ENCODE measurements at regions of chr2 and their contacts with region 1.

Region 1: GRCh38 chr2:233711312-233712008 is 1.2 kb upstream of the UGT1A5 start:
- DNase-seq: peak; percentile 60
- H3K4me3 ChIP-seq: no peak overlapping the region
- H3K27ac ChIP-seq: no peak overlapping the region
- H3K4me1 ChIP-seq: peaks cover 4% of the 10 kb centered on the region
- H3K27me3 ChIP-seq: no peaks in the 10 kb centered on the region
- CTCF ChIP-seq: peak; percentile 88 to 92

Region 2: DNA sequence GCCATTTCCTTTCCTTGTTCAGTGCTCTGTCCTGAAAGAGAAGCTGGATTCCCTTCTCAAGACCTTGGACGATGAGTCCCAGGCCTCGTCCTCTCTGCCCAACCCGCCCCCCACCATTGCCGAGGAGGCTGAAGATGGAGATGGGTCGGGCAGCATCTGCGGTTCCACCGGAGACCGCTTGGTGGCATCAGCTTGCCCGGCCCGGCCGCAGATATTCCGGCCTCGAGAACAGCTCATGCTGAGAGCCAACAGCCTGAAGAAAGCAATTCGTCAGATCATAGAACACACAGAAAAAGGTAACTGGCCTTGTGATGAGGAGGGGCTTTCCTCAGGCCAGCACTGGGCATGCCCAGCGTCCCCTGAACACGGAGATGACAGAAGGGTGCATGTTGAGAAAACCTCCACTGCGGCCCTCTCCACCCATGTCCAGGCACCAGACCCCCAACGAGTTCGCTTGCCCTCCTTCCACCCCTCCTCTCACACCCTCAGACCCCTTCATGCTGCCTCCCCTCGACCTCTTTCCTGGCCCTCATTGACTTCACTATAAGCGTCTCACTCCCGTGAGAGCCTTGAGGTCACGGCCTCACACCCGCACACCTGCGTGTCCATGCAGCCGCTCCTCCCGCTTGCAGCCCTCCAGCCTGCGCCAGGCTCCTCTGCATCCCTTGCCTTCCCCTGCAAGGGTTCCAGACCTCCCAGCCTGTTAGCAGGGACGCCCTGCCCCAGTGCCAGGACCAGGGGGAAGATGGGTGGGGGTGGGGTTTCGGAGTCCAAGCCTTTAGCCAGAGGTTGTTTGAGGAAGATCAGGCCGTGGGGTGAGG is 262.2 kb before region 1 on chr2:
- CTCF ChIA-PET with region 1: no interaction called
- dilution Hi-C with region 1: no loop called
- in situ Hi-C with region 1: no loop called
- intact Hi-C with region 1: loop called (anchors 1 kb)
- DNase-seq: no peak
- H3K4me3 ChIP-seq: no peak overlapping the region
- H3K27ac ChIP-seq: no peak overlapping the region
- H3K4me1 ChIP-seq: no peaks in the 10 kb centered on the region
- H3K27me3 ChIP-seq: no peaks in the 10 kb centered on the region
- CTCF ChIP-seq: peak; percentile 48 to 72

Region 3: DNA sequence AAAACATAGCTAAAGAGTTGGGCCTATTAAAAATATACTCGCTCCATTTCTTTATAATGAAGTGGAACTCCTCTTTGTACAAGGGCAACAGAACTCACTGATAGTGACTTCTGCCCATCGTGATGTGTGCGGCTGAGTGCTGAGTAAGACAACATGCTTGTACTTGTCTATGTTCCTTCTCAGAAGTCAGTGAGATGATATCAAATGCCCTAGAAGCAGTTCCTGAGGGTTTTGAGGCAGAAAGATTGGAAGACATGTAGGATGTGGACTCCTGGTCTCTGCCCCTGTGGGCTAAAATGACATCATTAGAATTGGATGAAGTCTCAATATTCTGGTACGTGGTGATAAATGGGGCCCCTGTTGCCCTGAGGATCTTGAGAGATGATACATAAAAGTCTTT is 218.7 kb before region 1 on chr2:
- CTCF ChIA-PET with region 1: no interaction called
- dilution Hi-C with region 1: no loop called
- in situ Hi-C with region 1: no loop called
- intact Hi-C with region 1: loop called (anchors 1 kb)
- DNase-seq: peak; percentile 93
- H3K4me3 ChIP-seq: no peak overlapping the region
- H3K27ac ChIP-seq: peak overlapping the region; percentile 97
- H3K4me1 ChIP-seq: peaks cover 49% of the 10 kb centered on the region
- H3K27me3 ChIP-seq: no peaks in the 10 kb centered on the region
- CTCF ChIP-seq: no peak

Region 4: DNA sequence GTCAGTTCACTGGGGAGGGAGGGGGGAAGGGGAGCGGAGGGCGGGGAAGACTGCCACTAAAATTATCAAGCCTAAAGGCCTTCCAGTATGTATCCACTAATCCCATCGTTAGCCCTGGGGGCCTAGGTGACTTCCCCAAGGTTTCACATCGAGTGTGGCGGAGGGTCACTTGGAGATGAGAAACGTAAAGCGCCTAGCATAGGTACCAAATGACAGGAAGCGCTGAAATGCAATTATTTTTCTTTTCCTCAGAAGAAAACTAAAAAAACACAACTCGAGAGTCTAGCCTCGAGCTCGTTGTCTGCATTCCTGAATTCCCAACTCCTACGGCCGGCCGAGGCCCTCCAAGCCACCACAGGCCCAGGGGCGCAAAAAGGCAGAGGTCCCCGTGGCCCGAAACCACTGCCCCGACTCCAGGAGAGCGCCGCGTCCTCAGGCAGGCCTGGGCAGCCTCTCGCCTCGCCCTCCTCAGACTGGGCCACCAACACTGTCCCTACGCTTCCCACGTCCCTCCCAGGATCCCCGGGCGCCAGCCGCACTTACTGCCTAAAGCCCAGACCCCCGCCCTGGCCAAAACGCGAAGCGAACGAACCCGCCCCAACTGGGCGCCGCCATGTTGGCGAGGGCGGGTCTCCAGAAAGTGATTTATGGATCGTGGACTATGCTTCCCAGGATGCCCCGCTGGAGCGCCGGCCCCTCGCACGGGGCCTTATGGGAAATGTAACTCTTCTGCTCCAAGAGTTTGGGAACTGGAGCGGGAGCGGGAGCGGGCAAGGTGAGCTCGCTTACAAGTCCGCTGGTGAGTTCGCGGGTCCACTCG is 145.1 kb before region 1 on chr2 and contains the start of gene USP40:
- CTCF ChIA-PET with region 1: no interaction called
- dilution Hi-C with region 1: no loop called
- in situ Hi-C with region 1: no loop called
- intact Hi-C with region 1: loop called (anchors 1 kb)
- DNase-seq: peak; percentile 87
- H3K4me3 ChIP-seq: peak within 1 kb of the TSS; percentile 88 to 99 (median 91)
- H3K27ac ChIP-seq: peak within 1 kb of the TSS; percentile 94
- H3K4me1 ChIP-seq: peaks cover 7% of the 10 kb centered on the region
- H3K27me3 ChIP-seq: no peaks in the 10 kb centered on the region
- CTCF ChIP-seq: no peak
- total RNA-seq, gene USP40: 36.0 to 64.9 TPM

Region 5: DNA sequence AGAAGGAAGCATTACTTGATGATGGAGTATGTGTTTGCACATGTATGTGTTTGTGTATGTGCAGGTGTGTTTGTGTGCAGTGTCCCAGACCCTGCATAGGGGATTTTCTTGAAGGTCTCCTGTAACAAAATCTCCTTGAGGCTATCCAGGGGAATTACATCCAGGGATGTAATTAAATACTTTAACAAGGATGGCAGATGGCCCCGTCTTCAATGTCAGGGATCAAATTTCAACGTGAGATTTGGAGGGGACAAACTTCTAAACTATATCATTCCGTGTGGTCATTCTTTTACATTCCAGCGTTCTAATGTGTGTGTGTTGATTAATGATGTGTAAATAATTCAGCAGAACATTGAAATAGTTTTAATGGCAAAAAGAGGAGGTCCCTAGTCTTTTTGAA is 36.5 kb before region 1 on chr2:
- CTCF ChIA-PET with region 1: no interaction called
- dilution Hi-C with region 1: no loop called
- in situ Hi-C with region 1: no loop called
- intact Hi-C with region 1: no loop called
- DNase-seq: no peak
- H3K4me3 ChIP-seq: no peak overlapping the region
- H3K27ac ChIP-seq: no peak overlapping the region
- H3K4me1 ChIP-seq: no peaks in the 10 kb centered on the region
- H3K27me3 ChIP-seq: no peaks in the 10 kb centered on the region
- CTCF ChIP-seq: peak in 1 of 2 donors; percentile 5

Region 6: GRCh38 chr2:233832869-233833311 is 121.4 kb after region 1 on chr2:
- CTCF ChIA-PET with region 1: interaction called, 5 read pairs
- dilution Hi-C with region 1: no loop called
- in situ Hi-C with region 1: no loop called
- intact Hi-C with region 1: loop called (anchors 1 kb)
- DNase-seq: peak; percentile 63
- H3K4me3 ChIP-seq: no peak overlapping the region
- H3K27ac ChIP-seq: no peak overlapping the region
- H3K4me1 ChIP-seq: peaks cover 18% of the 10 kb centered on the region
- H3K27me3 ChIP-seq: no peaks in the 10 kb centered on the region
- CTCF ChIP-seq: peak; percentile 12 to 53

Region 7: DNA sequence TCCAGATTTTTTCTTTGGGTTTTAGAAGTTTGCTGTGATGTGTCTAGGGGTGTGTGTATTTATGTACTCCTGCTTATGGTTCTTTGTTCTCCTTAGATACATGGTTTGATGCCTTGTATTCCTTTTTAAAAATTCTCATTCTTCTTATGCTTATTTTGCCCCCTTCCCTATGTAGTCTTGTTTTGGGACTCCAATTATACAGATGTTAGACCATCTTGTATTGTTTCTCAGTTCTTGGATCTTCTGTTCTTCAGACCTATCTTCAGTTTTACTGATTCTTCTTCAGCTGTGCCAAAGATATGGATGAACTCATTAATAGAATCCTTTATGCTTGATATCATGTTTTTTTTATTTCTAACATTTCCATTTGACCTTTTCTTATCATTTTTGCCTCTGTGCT is 170.9 kb after region 1 on chr2:
- CTCF ChIA-PET with region 1: no interaction called
- dilution Hi-C with region 1: no loop called
- in situ Hi-C with region 1: no loop called
- intact Hi-C with region 1: no loop called
- DNase-seq: no peak
- H3K4me3 ChIP-seq: no peak overlapping the region
- H3K27ac ChIP-seq: no peak overlapping the region
- H3K4me1 ChIP-seq: no peaks in the 10 kb centered on the region
- H3K27me3 ChIP-seq: no peaks in the 10 kb centered on the region
- CTCF ChIP-seq: no peak

Measured in mammary epithelial cell (primary cell).